Sciatic nerve (tissue), 2 donors: ENCODE measurements at regions of chr1 and their contacts with region 1.

Region 1: GRCh38 chr1:18981242-18981641 is 24.8 kb upstream of the IFFO2 start:
- DNase-seq: no peak
- ATAC-seq: no peak

Region 2: DNA sequence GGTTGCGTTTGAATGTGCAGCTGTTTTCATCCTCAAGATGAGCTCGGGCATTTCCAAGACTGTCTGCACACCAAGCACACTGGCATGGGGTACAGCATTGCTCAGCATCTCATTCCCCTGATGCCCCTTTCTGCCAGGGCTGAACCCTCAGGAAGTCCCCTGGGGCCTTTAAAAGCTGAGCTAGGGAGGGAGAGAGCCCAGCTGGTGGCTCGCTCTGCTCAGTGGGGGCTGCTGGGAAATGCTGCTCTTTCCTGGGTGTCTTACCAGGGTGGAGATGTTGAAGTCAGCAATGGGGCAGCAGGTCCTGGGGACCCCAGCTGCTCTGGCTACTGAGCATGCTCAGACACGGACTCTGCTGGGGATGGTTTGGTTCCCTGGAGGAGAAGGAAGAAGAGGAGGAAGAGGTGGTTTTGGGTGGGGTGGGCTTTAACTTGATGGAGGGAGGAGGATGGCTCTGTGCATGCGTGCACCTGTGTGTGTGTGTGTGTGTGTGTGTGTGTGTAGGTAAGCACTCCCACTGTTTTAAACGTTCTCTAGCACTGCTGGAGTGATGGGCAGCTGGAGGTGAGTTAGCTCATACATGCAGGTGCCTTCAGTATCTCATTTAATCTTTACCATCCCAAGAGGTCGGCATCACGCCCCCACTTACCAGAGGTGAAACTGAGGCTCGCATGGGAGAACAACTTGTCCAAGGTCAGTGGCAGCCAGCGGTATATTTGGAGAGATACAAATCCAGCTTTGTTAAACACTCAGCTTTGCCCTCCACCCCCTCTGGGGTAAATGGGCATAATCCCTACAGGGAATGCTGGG is 1185.2 kb before region 1 on chr1:
- intact Hi-C with region 1: loop called (anchors 5 kb)
- DNase-seq: no peak
- ATAC-seq: no peak

Region 3: DNA sequence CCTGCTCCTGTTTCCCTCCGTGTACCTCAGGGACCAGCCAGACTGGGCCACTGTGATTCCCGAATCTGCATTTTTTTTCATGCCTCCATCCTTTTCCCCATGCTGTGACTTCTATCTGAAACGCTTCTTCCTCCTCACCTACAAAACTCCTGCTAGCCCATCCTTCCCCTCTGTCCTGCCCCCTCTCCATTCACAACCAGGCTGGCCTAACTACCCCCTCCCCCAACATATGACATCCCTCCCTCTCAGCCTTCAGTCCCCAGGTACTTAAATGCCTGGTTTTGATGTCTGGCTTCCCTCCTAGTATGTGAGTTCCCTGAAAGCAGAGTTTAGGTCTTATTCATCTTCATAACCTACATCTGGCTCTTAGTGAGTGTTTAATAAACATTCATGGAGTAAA is 204.5 kb before region 1 on chr1:
- intact Hi-C with region 1: no loop called
- DNase-seq: peak; percentile 8
- ATAC-seq: no peak

Region 4: DNA sequence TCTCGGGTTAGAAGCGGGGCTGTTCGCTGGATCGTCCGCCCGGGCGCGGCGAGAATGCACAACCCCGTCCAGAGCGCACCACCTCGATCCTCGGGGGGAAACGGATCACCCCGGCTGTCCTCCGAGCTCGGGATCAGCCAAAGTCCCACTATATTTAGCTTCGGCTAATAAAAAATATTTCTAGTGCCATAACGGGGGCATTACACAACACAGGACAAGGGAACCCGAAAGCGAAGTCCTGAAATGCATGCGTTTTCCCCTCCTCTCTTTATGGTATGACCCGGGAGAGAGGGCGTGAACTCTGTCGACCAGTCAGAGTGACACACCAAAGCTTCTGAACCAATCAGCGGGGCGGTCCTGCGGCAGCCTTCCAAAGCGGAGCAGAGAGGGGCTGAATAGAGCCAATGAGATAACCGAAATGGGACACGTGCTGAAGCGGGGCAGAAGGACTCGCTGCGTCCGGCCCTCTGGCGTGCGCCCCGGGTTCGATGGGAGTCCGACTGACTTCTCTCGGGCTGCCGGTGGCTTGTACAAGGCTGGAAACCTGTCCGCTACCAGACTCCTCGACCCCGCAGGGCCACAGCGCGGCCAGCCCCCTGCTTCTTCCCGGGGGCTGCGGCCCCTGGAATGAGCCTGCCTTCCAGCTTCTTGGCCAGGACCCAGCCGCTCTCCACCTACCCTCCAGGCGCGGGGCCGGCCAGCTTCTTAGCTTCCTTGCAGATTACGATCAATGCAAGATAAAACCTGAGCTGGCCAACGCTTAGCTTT is 78.5 kb before region 1 on chr1 and contains the start of gene ALDH4A1:
- intact Hi-C with region 1: no loop called
- DNase-seq: peak; percentile 98
- ATAC-seq: peak; percentile 98
- total RNA-seq, gene ALDH4A1: 13.0 TPM

Region 5: GRCh38 chr1:18938008-18938706 is 43.1 kb before region 1 on chr1:
- intact Hi-C with region 1: no loop called
- DNase-seq: no peak
- ATAC-seq: no peak